ENCODE measurements at regions of chr6 and their contacts with region 1.

Region 1: GRCh38 chr6:106339334-106340029 is 13.9 kb upstream of the ATG5 start:
- DNase-seq: peak in 1 of 2 donors; percentile 43
- H3K4me3 ChIP-seq: no peak overlapping the region
- CTCF ChIP-seq: no peak
- POLR2A ChIP-seq: no peak

Region 2: GRCh38 chr6:105591053-105591452 is 748.4 kb before region 1 on chr6:
- intact Hi-C with region 1: no loop called
- DNase-seq: no peak
- H3K4me3 ChIP-seq: no peak overlapping the region
- CTCF ChIP-seq: no peak
- POLR2A ChIP-seq: no peak

Region 3: GRCh38 chr6:105886066-105886813 is 453.2 kb before region 1 on chr6:
- intact Hi-C with region 1: no loop called
- DNase-seq: no peak
- H3K4me3 ChIP-seq: no peak overlapping the region
- CTCF ChIP-seq: no peak
- POLR2A ChIP-seq: no peak

Region 4: GRCh38 chr6:106411643-106412200 is 72.2 kb after region 1 on chr6:
- intact Hi-C with region 1: no loop called
- DNase-seq: no peak
- H3K4me3 ChIP-seq: no peak overlapping the region
- CTCF ChIP-seq: no peak
- POLR2A ChIP-seq: no peak

Region 5: DNA sequence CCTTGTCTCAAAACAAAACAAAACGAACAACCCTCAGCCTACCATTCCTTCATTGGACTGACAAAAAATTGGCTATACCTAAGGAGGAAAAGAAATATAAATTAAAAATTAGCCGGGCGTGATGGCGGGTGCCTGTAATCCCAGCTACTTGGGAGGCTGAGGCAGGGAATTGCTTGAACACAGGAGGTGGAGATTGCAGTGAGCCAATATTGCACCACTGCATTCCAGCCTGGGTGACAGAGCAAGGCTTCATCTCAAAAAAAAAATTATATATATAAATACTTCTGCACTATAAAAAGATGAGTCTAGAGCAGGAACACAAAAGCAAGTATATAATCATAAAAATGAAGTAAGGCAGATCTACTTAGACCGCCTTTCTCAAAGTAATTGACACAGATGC is 130.8 kb after region 1 on chr6:
- intact Hi-C with region 1: no loop called
- DNase-seq: no peak
- H3K4me3 ChIP-seq: no peak overlapping the region
- CTCF ChIP-seq: no peak
- POLR2A ChIP-seq: no peak

Region 6: DNA sequence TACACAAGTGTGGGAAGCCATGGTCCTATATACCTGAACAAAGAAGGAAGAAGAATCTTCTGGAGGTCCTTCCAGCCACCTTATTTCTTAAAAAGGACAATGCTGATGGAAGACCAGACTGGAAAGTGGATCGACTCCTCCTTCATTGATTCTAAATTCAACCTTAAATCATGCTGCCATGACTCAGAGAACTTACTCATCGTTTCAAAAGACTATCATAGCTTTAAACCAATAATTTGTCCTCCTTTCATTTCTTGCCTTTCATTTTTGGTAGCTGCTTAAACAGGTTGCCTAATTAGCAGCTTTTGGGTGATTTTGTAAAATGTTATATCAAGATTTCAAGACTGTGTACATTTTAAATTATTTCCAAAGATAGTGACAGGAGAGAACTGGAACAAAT is 229.0 kb after region 1 on chr6:
- intact Hi-C with region 1: loop called (anchors 5 kb)
- DNase-seq: no peak
- H3K4me3 ChIP-seq: no peak overlapping the region
- CTCF ChIP-seq: no peak
- POLR2A ChIP-seq: no peak

Region 7: GRCh38 chr6:106997390-106998158 is 658.1 kb after region 1 on chr6:
- intact Hi-C with region 1: loop called (anchors 10 kb)
- DNase-seq: no peak
- H3K4me3 ChIP-seq: no peak overlapping the region
- CTCF ChIP-seq: no peak
- POLR2A ChIP-seq: no peak